H1 (cell line): ENCODE measurements at regions of chrX and their contacts with region 1.

Region 1: GRCh38 chrX:19382555-19383145 is 38.9 kb downstream of the PDHA1 start:
- DNase-seq: peak in 1 of 2 experiments; percentile 77
- H3K4me3 ChIP-seq: no peak overlapping the region
- H3K27ac ChIP-seq: no peak overlapping the region
- H3K4me1 ChIP-seq: no peaks in the 10 kb centered on the region; a peak in 1 of 7 replicates
- H3K27me3 ChIP-seq: no peaks in the 10 kb centered on the region
- CTCF ChIP-seq: peak; percentile 72 to 81 (median 77)
- EP300 ChIP-seq: no peak
- POLR2A ChIP-seq: no peak
- RAD21 ChIP-seq: peak; percentile 60 to 67

Region 2: DNA sequence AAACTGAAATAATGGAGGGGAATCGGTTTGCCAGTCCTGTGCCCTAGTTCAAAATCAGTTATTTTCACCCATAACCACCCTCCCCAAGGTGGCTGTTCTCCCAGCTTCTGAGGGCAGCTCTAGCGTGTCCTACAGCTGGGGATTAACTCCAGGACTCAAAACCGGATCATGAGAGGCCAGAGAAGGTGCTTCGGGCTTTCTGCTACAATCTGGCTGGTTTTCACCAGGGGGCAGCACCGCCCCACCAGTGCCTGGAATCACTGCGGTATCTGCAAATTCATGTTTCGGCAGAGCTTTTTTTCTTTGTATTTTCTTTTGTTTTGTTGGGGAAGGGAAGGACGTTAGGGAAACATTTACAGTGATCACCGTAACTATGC is 10.5 kb before region 1 on chrX:
- CTCF ChIA-PET with region 1: interaction called, 12 read pairs
- POLR2A ChIA-PET with region 1: no interaction called
- DNase-seq: peak in 1 of 2 experiments; percentile 74
- H3K4me3 ChIP-seq: peak overlapping the region; percentile 58 to 71 (median 60); a peak in 7 of 8 replicates
- H3K27ac ChIP-seq: no peak overlapping the region
- H3K4me1 ChIP-seq: 0 out of 7 replicates have a peak, but pooled peaks cover 0 to 4% (median 0%) of the 10 kb centered on the region in 4 experiments
- H3K27me3 ChIP-seq: peaks cover 0 to 5% (median 3%) of the 10 kb centered on the region in 4 experiments; a peak in 3 of 7 replicates
- CTCF ChIP-seq: peak; percentile 60 to 65 (median 65)
- EP300 ChIP-seq: no peak
- POLR2A ChIP-seq: no peak
- RAD21 ChIP-seq: peak; percentile 81 to 84